Activated T-helper 2 cell treated with anti-CD3 and anti-CD28 coated beads, Interferon-gamma antibody, Interleukin-2, Interleukin-4, amounts not matched to agents 10 μg/mL and 5 μg/mL and 100 μg/mL, durations not matched to agents 14 hours and 24 hours and 36 hours (primary cell): ENCODE measurements at regions of chr1 and their contacts with region 1.

Region 1: DNA sequence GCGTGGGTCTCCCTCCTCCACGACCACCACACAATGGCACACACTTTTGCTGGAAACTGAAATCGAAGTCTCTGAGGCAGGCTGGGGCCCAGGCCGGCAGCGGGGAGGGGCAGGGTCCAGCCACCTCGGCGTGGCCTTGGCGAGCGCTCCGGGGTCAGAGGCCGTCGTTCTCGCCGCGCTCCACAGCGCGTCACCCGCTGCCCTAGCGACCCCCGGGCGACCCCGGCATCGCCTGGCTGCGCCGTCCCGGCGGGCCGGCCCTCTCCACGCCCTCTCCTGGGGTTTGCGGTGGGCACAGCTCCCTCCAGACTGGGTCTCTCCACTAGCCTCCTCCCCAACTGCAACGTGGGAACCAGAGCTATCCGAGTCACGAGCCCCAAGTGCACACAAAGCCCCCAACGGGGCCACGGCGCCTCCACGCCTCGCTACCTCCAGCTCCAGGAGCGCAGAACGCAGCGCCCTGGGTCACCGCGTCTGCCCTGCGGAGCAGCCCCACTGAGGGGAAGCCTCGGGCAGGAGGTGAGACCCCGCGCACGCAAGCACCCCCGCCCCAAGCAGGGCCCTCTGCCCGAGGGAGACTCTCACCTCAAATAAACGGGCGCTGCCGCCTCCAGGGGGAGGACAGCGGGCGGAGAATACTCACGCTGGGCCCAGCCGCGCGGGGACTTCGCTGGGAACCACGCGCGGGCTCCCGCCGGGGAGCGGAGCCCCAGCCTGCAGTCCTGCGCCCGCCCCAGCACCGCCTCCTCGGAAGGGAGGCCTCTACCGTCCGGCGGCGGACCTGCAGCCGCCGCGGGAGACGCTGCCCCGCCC is 134.0 kb upstream of the BARHL2 start:
- DNase-seq: peak; percentile 63
- H3K4me3 Mint-ChIP-seq: peak overlapping the region; percentile 73
- H3K27ac Mint-ChIP-seq: no peak overlapping the region
- H3K4me1 Mint-ChIP-seq: peaks cover 13% of the 10 kb centered on the region
- H3K27me3 Mint-ChIP-seq: peaks cover 50% of the 10 kb centered on the region

Region 2: DNA sequence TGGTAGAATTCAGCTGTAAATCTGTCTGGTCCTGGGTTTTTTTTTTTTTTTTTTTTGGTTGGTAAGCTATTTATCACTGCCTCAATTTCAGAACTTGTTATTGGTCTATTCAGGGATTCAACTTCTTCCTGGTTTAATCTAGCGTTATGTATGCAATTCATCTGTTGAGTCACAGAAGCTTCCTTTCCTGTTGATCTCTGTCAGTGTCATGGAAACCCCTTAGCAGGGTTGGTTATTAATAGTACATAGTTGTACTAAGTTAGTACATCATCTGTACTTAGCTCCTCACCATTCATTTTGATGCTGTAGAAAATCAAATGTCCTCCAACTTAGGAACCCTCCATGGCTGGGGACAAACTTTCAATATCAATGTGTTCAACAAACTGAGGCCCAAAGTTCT is 83.0 kb before region 1 on chr1:
- intact Hi-C with region 1: no loop called
- DNase-seq: no peak
- H3K4me3 Mint-ChIP-seq: no peak overlapping the region
- H3K27ac Mint-ChIP-seq: no peak overlapping the region
- H3K4me1 Mint-ChIP-seq: peaks cover 4% of the 10 kb centered on the region
- H3K27me3 Mint-ChIP-seq: peaks cover 9% of the 10 kb centered on the region

Region 3: DNA sequence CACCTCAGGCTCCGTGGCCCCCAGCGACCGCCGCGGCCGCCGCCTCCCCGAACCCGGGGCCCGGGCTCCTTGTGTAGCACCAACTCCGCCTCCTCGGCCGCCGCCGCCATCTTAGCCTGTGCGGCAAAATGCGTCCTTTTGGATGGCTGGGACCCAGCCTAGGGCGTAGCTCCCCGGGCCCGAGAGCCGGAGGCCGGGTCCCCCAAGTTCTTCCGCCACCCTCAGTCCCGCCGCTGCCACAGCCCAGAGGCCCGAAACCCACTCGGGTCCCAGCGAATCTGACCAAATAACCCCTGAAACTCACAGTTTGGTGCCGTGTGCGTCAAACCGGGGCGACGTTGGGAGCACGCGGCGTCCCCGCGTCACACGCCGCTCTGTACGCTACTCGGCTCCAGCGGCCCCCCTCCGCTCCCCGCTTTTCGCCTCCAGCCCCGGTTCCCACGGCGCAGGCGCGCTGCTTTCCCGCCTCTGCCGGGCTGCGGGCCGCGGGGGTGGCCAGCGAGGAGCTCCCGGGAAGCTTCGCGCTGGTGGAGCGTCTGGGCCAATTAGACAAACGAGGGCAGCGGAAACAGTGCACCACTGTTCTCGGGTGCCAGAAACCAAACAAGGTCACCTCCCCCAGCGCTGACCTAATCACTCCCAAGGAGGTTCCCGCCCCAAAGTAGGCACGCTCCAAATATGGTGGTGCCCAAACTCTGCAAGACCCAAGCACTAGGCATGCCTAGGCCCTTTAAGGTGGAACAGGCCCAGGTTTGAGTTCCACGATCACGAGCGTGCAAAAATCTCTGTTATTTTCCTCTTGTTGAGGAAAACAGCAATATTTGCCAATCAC is 170.8 kb after region 1 on chr1 and contains the start of gene ZNF644:
- intact Hi-C with region 1: loop called (anchors 5 kb)
- DNase-seq: peak; percentile 89
- H3K4me3 Mint-ChIP-seq: peak within 1 kb of the TSS; percentile 95
- H3K27ac Mint-ChIP-seq: peak within 1 kb of the TSS; percentile 100
- H3K4me1 Mint-ChIP-seq: peaks cover 37% of the 10 kb centered on the region
- H3K27me3 Mint-ChIP-seq: no peaks in the 10 kb centered on the region
- total RNA-seq, gene ZNF644: 49.8 and 56.1 TPM in 2 replicates

Region 4: GRCh38 chr1:91500756-91501522 is 649.8 kb after region 1 on chr1 and contains the start of gene CDC7:
- intact Hi-C with region 1: loop called (anchors 5 kb)
- DNase-seq: peak; percentile 84
- H3K4me3 Mint-ChIP-seq: no peak within 1 kb of the TSS
- H3K27ac Mint-ChIP-seq: no peak within 1 kb of the TSS
- H3K4me1 Mint-ChIP-seq: peaks cover 29% of the 10 kb centered on the region
- H3K27me3 Mint-ChIP-seq: no peaks in the 10 kb centered on the region
- total RNA-seq, gene CDC7: 27.4 and 28.8 TPM in 2 replicates